Prostate gland (tissue), 2 donors: ENCODE measurements at regions of chr2 and their contacts with region 1.

Region 1: GRCh38 chr2:239308661-239309397 is 92.0 kb downstream of the HDAC4 start:
- DNase-seq: no peak
- H3K4me3 ChIP-seq: peak overlapping the region; percentile 15 to 21
- H3K27ac ChIP-seq: peak overlapping the region; percentile 56 to 62
- H3K4me1 ChIP-seq: peaks cover 23% of the 10 kb centered on the region
- H3K27me3 ChIP-seq: no peaks in the 10 kb centered on the region
- CTCF ChIP-seq: no peak
- POLR2A ChIP-seq: no peak

Region 2: DNA sequence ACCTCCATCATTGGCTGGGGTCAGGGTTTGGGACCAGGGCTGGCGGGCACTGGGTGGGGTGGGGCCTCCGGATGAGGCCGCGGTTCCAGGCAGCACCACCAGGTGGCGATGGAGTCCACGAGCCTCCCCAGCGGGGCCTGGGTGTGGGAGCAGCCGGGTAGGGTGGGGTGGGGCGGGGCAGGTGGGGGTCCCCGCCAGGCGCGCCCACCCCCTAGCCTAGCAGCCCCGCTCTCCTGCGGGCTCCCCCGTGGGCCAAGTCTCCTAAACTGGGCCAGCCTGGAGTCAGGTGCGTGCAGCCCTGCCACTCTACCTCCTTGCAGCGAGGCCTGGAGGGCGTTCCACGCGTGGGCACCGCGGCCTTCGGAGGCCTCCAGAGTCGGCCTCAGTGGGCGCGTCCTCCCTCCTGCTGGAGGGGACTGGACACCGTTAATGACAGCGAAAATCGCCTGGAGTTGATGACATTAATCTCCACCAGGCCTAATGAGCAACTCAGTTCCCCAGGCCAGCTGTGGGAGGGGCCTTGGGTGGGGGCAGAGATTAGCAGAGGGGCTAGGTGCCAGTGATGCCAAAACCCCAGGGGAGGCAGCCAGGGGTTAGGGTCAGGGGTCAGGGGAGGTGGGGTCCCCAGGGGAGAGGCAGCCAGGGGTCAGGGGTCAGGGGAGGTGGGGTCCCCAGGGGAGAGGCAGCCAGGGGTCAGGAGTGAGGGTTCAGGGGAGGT is 273.3 kb before region 1 on chr2:
- intact Hi-C with region 1: no loop called
- DNase-seq: no peak
- H3K4me3 ChIP-seq: no peak overlapping the region
- H3K27ac ChIP-seq: no peak overlapping the region
- H3K4me1 ChIP-seq: no peaks in the 10 kb centered on the region
- H3K27me3 ChIP-seq: no peaks in the 10 kb centered on the region
- CTCF ChIP-seq: peak; percentile 65 to 92 (median 78)
- POLR2A ChIP-seq: no peak

Region 3: DNA sequence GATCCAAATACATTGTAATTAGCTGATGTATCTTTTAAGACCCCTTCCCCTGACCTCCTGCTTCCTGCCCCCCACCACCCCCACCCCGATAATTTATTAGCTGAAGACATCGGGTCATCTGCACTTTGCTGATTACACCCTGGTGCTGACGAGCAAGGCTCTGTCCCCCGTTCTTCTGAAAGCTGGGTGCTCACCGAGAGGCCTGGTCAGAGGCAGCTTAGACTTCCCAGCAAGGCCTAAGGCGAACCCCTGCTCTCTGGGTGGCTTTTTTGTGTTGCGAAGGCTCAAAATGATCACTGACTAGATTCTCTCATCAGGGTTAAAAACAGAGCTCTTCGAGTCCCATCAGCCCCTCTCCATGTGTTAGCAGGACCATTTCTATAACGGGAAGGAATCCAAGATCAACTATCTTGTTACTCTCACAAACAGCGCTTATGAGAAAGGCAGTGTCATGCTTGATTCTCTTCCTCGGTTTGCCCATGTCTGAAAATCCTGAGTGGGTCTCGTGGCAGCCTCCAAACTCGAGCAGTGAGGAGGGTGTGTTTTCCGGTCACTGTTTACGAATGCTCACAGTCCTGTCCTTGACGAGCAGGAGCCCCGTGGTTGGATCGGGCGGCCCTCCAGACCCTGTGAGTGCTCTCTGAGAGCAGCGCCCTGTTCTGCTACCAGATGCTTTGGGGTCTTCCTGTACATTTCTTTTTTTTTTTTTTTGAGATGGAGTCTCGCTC is 109.6 kb before region 1 on chr2:
- intact Hi-C with region 1: loop called (anchors 5 kb)
- DNase-seq: no peak
- H3K4me3 ChIP-seq: no peak overlapping the region
- H3K27ac ChIP-seq: peak overlapping the region; percentile 62 to 75
- H3K4me1 ChIP-seq: no peaks in the 10 kb centered on the region
- H3K27me3 ChIP-seq: no peaks in the 10 kb centered on the region
- CTCF ChIP-seq: no peak
- POLR2A ChIP-seq: no peak

Region 4: GRCh38 chr2:239225871-239226561 is 82.8 kb before region 1 on chr2:
- intact Hi-C with region 1: loop called (anchors 5 kb)
- DNase-seq: no peak
- H3K4me3 ChIP-seq: no peak overlapping the region
- H3K27ac ChIP-seq: peak overlapping the region; percentile 35 to 40
- H3K4me1 ChIP-seq: peaks cover 23% of the 10 kb centered on the region
- H3K27me3 ChIP-seq: no peaks in the 10 kb centered on the region
- CTCF ChIP-seq: no peak
- POLR2A ChIP-seq: no peak

Region 5: GRCh38 chr2:239239607-239240413 is 69.0 kb before region 1 on chr2:
- intact Hi-C with region 1: no loop called
- DNase-seq: no peak
- H3K4me3 ChIP-seq: no peak overlapping the region
- H3K27ac ChIP-seq: peak overlapping the region; percentile 59 to 64
- H3K4me1 ChIP-seq: peaks cover 7% of the 10 kb centered on the region
- H3K27me3 ChIP-seq: no peaks in the 10 kb centered on the region
- CTCF ChIP-seq: no peak
- POLR2A ChIP-seq: no peak

Region 6: DNA sequence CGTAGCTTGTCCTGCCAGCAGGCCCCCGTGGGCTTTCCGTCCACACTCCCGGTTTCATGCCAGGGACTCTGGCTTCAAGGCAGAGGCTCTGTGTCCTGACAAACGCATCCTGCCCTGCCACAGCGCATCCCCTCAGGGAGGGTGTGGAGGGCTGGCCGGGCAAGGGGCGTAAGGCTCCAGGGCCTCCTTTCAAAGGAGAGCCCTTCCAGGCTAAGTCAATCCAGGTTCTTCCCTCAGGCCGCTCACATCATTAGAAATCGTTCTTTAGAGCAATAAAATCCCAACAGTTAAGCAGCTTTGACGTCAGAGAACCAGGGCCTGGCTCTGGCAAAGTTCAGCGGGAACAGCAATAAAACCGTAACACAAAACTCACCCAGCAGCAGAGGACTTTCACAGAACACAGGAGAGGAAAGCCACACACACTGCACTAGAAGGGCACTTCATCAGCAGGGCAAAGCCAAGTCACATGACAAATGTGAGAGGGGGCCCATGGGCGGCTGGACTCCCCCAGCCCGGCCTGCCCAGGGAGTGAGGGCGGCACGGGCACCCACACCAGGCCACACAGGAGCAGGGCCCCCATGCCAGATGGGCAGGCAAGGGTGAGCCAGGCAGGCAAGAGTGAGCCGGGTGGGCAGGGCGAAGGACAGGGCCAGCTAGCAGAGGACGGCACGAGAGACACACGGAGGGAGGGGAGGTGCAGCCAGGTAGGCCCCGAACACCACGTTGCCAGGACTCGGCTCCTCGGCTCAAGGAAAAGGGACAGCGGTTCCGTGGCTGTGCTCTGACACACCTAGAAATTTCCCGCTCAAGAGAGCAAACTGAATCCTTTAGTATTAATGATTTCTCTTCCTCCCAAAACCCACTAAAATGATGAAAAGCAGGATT is 40.0 kb after region 1 on chr2:
- intact Hi-C with region 1: loop called (anchors 5 kb)
- DNase-seq: peak; percentile 86
- H3K4me3 ChIP-seq: no peak overlapping the region
- H3K27ac ChIP-seq: peak overlapping the region; percentile 90 to 94
- H3K4me1 ChIP-seq: peaks cover 27% of the 10 kb centered on the region
- H3K27me3 ChIP-seq: no peaks in the 10 kb centered on the region
- CTCF ChIP-seq: no peak
- POLR2A ChIP-seq: peak; percentile 68